ENCODE measurements at regions of chrX and their contacts with region 1.

Region 1: DNA sequence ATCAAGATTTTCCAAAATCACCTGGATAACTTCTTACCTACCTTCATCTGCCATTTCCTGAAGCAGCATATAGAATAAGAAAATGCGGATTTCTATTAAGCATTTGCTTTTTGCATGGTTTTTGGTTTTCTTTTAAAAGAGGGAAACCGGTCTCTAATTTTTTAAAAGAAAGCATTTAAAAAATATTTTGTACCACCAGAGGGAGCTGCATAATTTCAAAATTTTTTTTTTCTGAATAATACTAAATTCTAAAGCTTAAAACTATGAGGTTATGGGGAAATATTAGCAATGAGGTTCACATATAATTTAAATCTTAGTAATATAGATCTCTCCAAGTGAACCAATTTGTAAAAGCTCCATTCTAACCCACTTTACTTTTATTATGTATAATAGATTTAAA is 137.7 kb upstream of the TENT5D start:
- DNase-seq: no peak
- ATAC-seq: no peak
- H3K4me3 ChIP-seq: no peak overlapping the region
- H3K27ac ChIP-seq: no peak overlapping the region
- H3K4me1 ChIP-seq: no peaks in the 10 kb centered on the region
- H3K27me3 ChIP-seq: no peaks in the 10 kb centered on the region
- CTCF ChIP-seq: peak in 1 of 3 experiments; percentile 27; a peak in 2 of 6 replicates
- POLR2A ChIP-seq: no peak
- RAD21 ChIP-seq: no peak

Region 2: GRCh38 chrX:80578517-80579105 is 296.1 kb after region 1 on chrX:
- CTCF ChIA-PET with region 1: no interaction called
- POLR2A ChIA-PET with region 1: no interaction called
- RAD21 ChIA-PET with region 1: no interaction called
- intact Hi-C with region 1: loop called (anchors 5 kb)
- DNase-seq: peak; percentile 10
- ATAC-seq: 0 out of 2 replicates have a peak, but pooled peaks have one; percentile 36
- H3K4me3 ChIP-seq: no peak overlapping the region
- H3K27ac ChIP-seq: no peak overlapping the region
- H3K4me1 ChIP-seq: no peaks in the 10 kb centered on the region
- H3K27me3 ChIP-seq: no peaks in the 10 kb centered on the region
- CTCF ChIP-seq: peak in 2 of 3 experiments; percentile 31 to 46; a peak in 3 of 6 replicates
- POLR2A ChIP-seq: no peak
- RAD21 ChIP-seq: peak; percentile 23; the same call in 1 of the 2 replicates

Measured in HCT116 (cell line).